ENCODE measurements at regions of chr4 and their contacts with region 1.

Region 1: GRCh38 chr4:38034986-38035882 is 75.0 kb downstream of the PTTG2 start:
- DNase-seq: peak; percentile 70
- CTCF ChIP-seq: peak; percentile 59

Region 2: GRCh38 chr4:37793562-37793961 is 241.7 kb before region 1 on chr4:
- CTCF ChIA-PET with region 1: interaction called, 10 read pairs
- POLR2A ChIA-PET with region 1: no interaction called
- DNase-seq: no peak
- CTCF ChIP-seq: peak; percentile 18

Region 3: DNA sequence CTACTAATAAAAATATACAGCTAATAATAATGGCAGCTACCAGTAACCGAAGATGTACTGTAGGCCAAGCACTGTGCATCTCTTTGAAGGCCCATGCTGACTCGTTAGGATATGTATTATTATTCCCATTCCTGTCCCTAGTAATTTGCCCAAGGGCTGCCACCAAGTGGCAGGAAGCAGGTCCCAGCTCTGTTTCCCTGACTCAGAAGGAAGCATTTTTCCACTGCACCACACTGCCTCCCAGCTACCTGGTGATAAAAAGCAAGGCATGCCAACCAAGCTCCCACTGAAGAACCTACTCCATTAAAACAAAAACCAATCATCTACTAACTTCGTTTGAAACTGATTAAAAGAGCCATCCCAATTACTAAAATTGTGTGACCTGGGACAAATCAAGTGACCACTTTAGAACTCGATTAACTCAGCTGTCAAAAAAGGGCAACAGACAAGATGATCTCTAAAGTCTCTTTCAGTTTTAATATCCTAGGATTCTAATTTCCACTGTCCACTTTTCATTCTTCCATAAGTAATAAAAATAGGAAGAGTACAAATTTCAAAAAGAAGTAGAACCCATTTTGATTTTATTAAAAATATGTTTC is 233.1 kb before region 1 on chr4:
- CTCF ChIA-PET with region 1: interaction called, 51 read pairs
- POLR2A ChIA-PET with region 1: no interaction called
- DNase-seq: no peak
- CTCF ChIP-seq: peak; percentile 19

Region 4: GRCh38 chr4:38046728-38047489 is 11.7 kb after region 1 on chr4:
- CTCF ChIA-PET with region 1: interaction called, 12 read pairs
- POLR2A ChIA-PET with region 1: no interaction called
- DNase-seq: no peak
- CTCF ChIP-seq: no peak

Measured in GM10248 (cell line).